CD8-positive, alpha-beta T cell (primary cell): ENCODE measurements at regions of chr11 and their contacts with region 1.

Region 1: GRCh38 chr11:65859200-65859811 is 927 bp upstream of the MUS81 start:
- DNase-seq: peak; percentile 91 to 98 (median 98)
- ATAC-seq: peak; percentile 60
- H3K4me3 ChIP-seq: peak overlapping the region; percentile 65 to 73
- H3K4me3 Mint-ChIP-seq: peak overlapping the region; percentile 95
- H3K27ac ChIP-seq: peak overlapping the region; percentile 78 to 98
- H3K27ac Mint-ChIP-seq: peak overlapping the region; percentile 96
- H3K4me1 ChIP-seq: peaks cover 42% of the 10 kb centered on the region
- H3K4me1 Mint-ChIP-seq: peaks cover 51% of the 10 kb centered on the region
- H3K27me3 ChIP-seq: no peaks in the 10 kb centered on the region
- H3K27me3 Mint-ChIP-seq: no peaks in the 10 kb centered on the region
- CTCF ChIP-seq: no peak

Region 2: GRCh38 chr11:65575568-65576231 is 283.6 kb before region 1 on chr11 and contains the start of gene EHBP1L1:
- CTCF ChIA-PET with region 1: no interaction called
- POLR2A ChIA-PET with region 1: interaction called, 4 read pairs
- intact Hi-C with region 1: loop called (anchors 1 to 2 kb)
- DNase-seq: peak; percentile 45 to 88 (median 75)
- ATAC-seq: peak; percentile 32
- H3K4me3 ChIP-seq: peak within 1 kb of the TSS; percentile 71 to 78
- H3K4me3 Mint-ChIP-seq: peak within 1 kb of the TSS; percentile 93
- H3K27ac ChIP-seq: peak within 1 kb of the TSS; percentile 49 to 89
- H3K27ac Mint-ChIP-seq: peak within 1 kb of the TSS; percentile 96
- H3K4me1 ChIP-seq: peaks cover 54% of the 10 kb centered on the region
- H3K4me1 Mint-ChIP-seq: peaks cover 55% of the 10 kb centered on the region
- H3K27me3 ChIP-seq: no peaks in the 10 kb centered on the region
- H3K27me3 Mint-ChIP-seq: no peaks in the 10 kb centered on the region
- CTCF ChIP-seq: no peak
- total RNA-seq, gene EHBP1L1: 64.7 to 65.1 TPM

Region 3: GRCh38 chr11:65720237-65720934 is 138.9 kb before region 1 on chr11 and contains the start of gene RNASEH2C:
- CTCF ChIA-PET with region 1: no interaction called
- POLR2A ChIA-PET with region 1: no interaction called
- intact Hi-C with region 1: loop called in 1 of 2 experiments (anchors 1 kb)
- DNase-seq: peak; percentile 53 to 89 (median 73)
- ATAC-seq: peak; percentile 93
- H3K4me3 ChIP-seq: peak within 1 kb of the TSS; percentile 84 to 92
- H3K4me3 Mint-ChIP-seq: peak within 1 kb of the TSS; percentile 90
- H3K27ac ChIP-seq: peak within 1 kb of the TSS; percentile 70 to 73
- H3K27ac Mint-ChIP-seq: peak within 1 kb of the TSS; percentile 88
- H3K4me1 ChIP-seq: peaks cover 22% of the 10 kb centered on the region
- H3K4me1 Mint-ChIP-seq: peaks cover 33% of the 10 kb centered on the region
- H3K27me3 ChIP-seq: no peaks in the 10 kb centered on the region
- H3K27me3 Mint-ChIP-seq: no peaks in the 10 kb centered on the region
- CTCF ChIP-seq: no peak
- total RNA-seq, gene RNASEH2C: 27.7 to 32.0 TPM

Region 4: DNA sequence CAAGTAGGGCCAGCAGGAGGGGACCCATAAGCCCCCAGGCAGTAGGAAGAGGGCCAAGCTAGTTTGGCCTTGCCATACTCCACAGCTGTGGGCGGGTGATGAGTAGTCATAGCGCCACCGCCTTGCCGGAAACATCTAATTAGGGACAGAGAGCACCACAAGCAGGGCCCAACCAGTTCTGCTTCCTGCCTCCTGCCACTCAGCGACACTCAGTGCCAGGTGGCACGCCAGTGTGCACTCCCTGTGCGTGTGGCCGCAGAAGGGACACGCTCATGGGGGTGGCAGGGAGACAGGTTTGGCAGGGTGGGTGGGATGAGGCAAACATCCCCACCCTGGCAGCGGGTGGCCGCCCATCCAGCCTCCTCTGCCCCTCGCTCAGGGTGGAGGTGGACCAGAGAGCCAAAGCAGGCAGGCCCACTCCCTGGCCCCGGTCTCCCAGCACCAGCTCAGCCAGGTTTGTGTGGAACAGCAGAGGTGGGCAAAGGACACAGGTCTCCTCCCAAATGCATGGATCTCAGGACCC is 67.6 kb before region 1 on chr11:
- CTCF ChIA-PET with region 1: no interaction called
- POLR2A ChIA-PET with region 1: no interaction called
- intact Hi-C with region 1: no loop called
- DNase-seq: peak in 4 of 9 experiments; percentile 36 to 58 (median 48)
- ATAC-seq: peak; percentile 66
- H3K4me3 ChIP-seq: no peak overlapping the region
- H3K4me3 Mint-ChIP-seq: no peak overlapping the region
- H3K27ac ChIP-seq: no peak overlapping the region
- H3K27ac Mint-ChIP-seq: no peak overlapping the region
- H3K4me1 ChIP-seq: peaks cover 24% of the 10 kb centered on the region
- H3K4me1 Mint-ChIP-seq: peaks cover 8% of the 10 kb centered on the region
- H3K27me3 ChIP-seq: peaks cover 23 to 25% of the 10 kb centered on the region in 2 experiments
- H3K27me3 Mint-ChIP-seq: peaks cover 31% of the 10 kb centered on the region
- CTCF ChIP-seq: no peak

Region 5: GRCh38 chr11:65873318-65874156 is 14.2 kb after region 1 on chr11:
- CTCF ChIA-PET with region 1: interaction called, 287 read pairs
- POLR2A ChIA-PET with region 1: interaction called, 39 read pairs
- intact Hi-C with region 1: loop called (anchors 2 kb)
- DNase-seq: peak; percentile 93 to 99 (median 97)
- ATAC-seq: peak; percentile 98
- H3K4me3 ChIP-seq: peak overlapping the region; percentile 56 to 59
- H3K4me3 Mint-ChIP-seq: peak overlapping the region; percentile 89
- H3K27ac ChIP-seq: peak overlapping the region; percentile 74 to 94
- H3K27ac Mint-ChIP-seq: peak overlapping the region; percentile 91
- H3K4me1 ChIP-seq: peaks cover 34% of the 10 kb centered on the region
- H3K4me1 Mint-ChIP-seq: peaks cover 42% of the 10 kb centered on the region
- H3K27me3 ChIP-seq: no peaks in the 10 kb centered on the region
- H3K27me3 Mint-ChIP-seq: no peaks in the 10 kb centered on the region
- CTCF ChIP-seq: no peak

Region 6: DNA sequence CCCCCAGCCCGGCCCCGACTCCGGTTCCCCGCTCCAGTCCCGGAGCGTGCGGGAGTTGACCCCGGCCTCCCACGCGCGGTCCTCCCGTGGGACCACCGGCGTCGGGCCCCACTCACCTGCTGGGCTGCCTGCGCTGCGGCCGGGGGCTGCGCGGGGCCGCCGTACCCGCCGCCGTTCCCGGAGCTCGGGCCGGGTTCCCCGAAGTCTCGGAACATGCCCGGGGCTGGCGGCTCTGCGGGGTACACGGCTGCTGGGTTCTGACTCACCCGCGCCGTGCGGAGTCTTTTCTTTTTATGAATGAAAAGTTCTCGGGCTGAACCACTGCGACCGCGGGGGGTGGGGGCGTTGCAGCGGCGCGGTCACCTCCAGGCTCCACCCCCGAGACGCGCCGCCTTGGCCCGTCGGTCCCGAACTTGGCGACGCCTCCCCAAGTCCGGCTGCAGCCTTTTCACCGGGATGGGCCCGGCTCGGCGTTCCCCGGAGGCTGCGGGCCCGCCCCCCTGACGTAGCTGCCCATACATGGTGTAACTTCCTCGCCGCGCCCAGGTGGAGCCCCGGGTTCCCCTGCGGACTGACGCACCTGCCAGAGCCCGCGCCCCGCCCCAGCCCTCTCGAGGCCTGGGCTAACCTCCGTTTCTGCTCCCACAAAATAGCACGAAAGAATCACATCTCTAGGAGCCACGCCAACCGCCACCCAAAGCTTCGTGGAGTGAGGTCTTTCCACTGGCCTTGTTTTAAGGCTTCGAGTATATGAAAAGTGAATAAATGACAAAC is 41.0 kb after region 1 on chr11 and contains the start of gene FOSL1:
- CTCF ChIA-PET with region 1: interaction called, 10 read pairs
- POLR2A ChIA-PET with region 1: interaction called, 7 read pairs
- intact Hi-C with region 1: no loop called
- DNase-seq: peak; percentile 82 to 97 (median 91)
- ATAC-seq: peak; percentile 93
- H3K4me3 ChIP-seq: peak within 1 kb of the TSS; percentile 36 to 49
- H3K4me3 Mint-ChIP-seq: peak within 1 kb of the TSS; percentile 73
- H3K27ac ChIP-seq: peak within 1 kb of the TSS; percentile 0 to 32
- H3K27ac Mint-ChIP-seq: peak within 1 kb of the TSS; percentile 69
- H3K4me1 ChIP-seq: peaks cover 20% of the 10 kb centered on the region
- H3K4me1 Mint-ChIP-seq: peaks cover 8% of the 10 kb centered on the region
- H3K27me3 ChIP-seq: peaks cover 0 to 4% of the 10 kb centered on the region in 2 experiments
- H3K27me3 Mint-ChIP-seq: no peaks in the 10 kb centered on the region
- CTCF ChIP-seq: no peak
- total RNA-seq, gene FOSL1: 2.0 to 4.0 TPM

Region 7: DNA sequence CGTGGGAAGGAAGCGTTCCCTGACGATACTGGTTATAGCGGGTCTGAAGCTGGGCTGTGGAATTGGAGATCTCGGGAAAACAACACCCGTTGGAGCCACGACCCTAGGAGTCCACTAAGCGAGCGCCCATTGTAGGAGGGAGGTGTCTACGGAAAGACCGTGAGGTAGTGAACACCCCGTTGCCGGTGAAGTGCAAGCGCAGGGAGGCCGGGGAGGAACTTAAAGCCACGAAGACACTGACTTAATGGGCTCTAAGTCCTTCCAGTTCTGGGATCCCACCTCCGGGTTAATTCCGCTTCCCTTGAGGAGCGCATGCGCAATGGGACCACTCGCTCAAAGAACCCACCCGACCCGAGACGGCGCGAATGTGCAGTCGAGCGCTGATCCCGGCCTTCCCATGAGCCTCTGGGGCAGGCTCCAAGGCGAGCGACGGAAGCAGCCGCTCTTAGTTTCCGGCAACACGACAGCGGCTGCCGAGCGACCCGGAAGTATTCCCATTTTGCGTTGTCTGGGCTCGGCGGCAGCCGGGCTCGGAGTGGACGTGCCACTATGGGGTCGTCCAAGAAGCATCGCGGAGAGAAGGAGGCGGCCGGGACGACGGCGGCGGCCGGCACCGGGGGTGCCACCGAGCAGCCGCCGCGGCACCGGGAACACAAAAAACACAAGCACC is 102.1 kb after region 1 on chr11 and contains the start of gene SART1:
- CTCF ChIA-PET with region 1: no interaction called
- POLR2A ChIA-PET with region 1: interaction called, 3 read pairs
- intact Hi-C with region 1: loop called (anchors 1 kb)
- DNase-seq: peak; percentile 92 to 99 (median 96)
- ATAC-seq: peak; percentile 88
- H3K4me3 ChIP-seq: peak within 1 kb of the TSS; percentile 62 to 65
- H3K4me3 Mint-ChIP-seq: peak within 1 kb of the TSS; percentile 98
- H3K27ac ChIP-seq: peak within 1 kb of the TSS; percentile 83 to 85
- H3K27ac Mint-ChIP-seq: peak within 1 kb of the TSS; percentile 99
- H3K4me1 ChIP-seq: peaks cover 38% of the 10 kb centered on the region
- H3K4me1 Mint-ChIP-seq: peaks cover 53% of the 10 kb centered on the region
- H3K27me3 ChIP-seq: no peaks in the 10 kb centered on the region
- H3K27me3 Mint-ChIP-seq: no peaks in the 10 kb centered on the region
- CTCF ChIP-seq: no peak
- total RNA-seq, gene SART1: 102 to 123 TPM

Region 8: DNA sequence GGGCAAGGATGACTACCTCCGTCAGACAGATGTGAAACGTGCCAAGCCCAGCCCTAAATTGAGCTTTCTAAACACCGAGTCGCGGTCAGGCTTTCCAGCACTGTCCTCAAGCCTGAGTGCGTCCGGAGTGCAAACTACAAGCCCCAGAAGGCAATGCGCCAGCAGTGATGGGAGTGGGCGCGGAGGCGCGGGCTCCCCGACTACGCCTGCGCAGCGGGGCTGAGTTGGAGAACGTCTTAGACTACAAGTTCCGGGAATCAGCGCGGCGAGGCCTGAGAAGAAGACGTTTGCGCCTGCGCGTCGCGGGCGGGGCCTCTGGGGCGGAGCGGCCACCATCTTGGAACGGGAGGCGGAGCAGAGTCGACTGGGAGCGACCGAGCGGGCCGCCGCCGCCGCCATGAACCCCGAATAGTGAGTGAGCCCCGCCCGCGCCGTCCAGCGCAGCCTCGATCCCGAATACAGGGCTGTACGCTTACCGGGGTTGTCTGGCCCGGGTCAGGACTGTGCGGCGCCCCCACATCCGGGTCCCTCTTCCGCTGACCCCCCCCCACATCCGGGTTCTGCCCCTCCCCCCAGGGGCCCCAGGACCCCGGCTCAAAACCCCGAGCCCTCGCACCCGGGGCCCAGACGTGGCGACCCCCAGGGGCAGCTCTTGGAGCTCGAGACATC is 409.1 kb after region 1 on chr11 and contains the start of gene RAB1B:
- CTCF ChIA-PET with region 1: no interaction called
- POLR2A ChIA-PET with region 1: interaction called, 3 read pairs
- intact Hi-C with region 1: loop called in 1 of 2 experiments (anchors 5 kb)
- DNase-seq: peak; percentile 99 to 100 (median 100)
- ATAC-seq: peak; percentile 75
- H3K4me3 ChIP-seq: peak within 1 kb of the TSS; percentile 89 to 97
- H3K4me3 Mint-ChIP-seq: peak within 1 kb of the TSS; percentile 97
- H3K27ac ChIP-seq: peak within 1 kb of the TSS; percentile 83 to 91
- H3K27ac Mint-ChIP-seq: peak within 1 kb of the TSS; percentile 97
- H3K4me1 ChIP-seq: peaks cover 43% of the 10 kb centered on the region
- H3K4me1 Mint-ChIP-seq: peaks cover 50% of the 10 kb centered on the region
- H3K27me3 ChIP-seq: no peaks in the 10 kb centered on the region
- H3K27me3 Mint-ChIP-seq: no peaks in the 10 kb centered on the region
- CTCF ChIP-seq: no peak
- total RNA-seq, gene RAB1B: 34.4 to 36.3 TPM